PC-3 (cell line): ENCODE measurements at regions of chr1 and their contacts with region 1.

Region 1: DNA sequence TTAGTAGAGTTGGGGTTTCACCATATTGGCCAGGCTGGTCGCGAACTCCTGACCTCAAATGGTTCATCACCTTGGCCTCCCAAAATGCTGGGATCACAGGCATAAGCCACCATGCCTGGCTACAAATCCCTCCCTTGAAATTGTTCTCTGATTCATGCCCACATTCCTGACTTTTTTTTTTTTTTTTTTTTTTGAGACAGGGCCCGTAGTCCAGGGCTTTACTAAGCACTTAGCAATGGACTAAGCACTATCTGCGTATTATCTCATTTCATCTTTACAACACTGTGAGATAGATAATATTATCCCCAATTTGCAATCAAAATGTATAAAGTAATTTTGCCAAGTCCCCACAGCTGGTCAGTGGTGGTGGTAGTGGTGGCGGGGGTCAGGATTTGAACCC is 58.9 kb downstream of the VWA5B1 start:
- DNase-seq: no peak
- ATAC-seq: no peak
- H3K4me3 ChIP-seq: no peak overlapping the region
- H3K27ac ChIP-seq: no peak overlapping the region
- H3K4me1 ChIP-seq: no peaks in the 10 kb centered on the region
- H3K27me3 ChIP-seq: no peaks in the 10 kb centered on the region
- CTCF ChIP-seq: no peak

Region 2: DNA sequence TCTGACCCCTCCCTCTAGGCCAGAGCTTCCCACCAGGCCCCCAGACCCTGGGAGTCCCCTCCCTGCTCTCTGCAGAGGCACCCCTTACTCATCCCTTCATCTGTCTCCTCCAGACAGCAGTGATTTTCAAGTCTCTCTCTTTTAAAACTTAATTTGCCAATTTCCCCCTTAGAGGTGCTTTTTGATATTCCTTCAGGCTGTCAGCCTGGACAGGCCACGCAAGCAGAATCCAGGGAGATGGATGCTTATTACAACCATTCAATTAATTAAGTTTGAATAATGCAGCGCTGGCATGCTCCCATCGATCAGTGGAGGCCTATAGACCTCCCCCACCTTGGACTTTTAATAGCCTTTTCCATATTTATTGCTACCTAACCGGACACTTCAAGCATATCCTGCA is 130.3 kb after region 1 on chr1:
- CTCF ChIA-PET with region 1: interaction called, 14 read pairs
- POLR2A ChIA-PET with region 1: no interaction called
- intact Hi-C with region 1: no loop called
- DNase-seq: no peak
- ATAC-seq: no peak
- H3K4me3 ChIP-seq: no peak overlapping the region
- H3K27ac ChIP-seq: no peak overlapping the region
- H3K4me1 ChIP-seq: peaks cover 58% of the 10 kb centered on the region
- H3K27me3 ChIP-seq: peaks cover 4% of the 10 kb centered on the region
- CTCF ChIP-seq: no peak